PC-9 (cell line): ENCODE measurements at regions of chr9 and their contacts with region 1.

Region 1: DNA sequence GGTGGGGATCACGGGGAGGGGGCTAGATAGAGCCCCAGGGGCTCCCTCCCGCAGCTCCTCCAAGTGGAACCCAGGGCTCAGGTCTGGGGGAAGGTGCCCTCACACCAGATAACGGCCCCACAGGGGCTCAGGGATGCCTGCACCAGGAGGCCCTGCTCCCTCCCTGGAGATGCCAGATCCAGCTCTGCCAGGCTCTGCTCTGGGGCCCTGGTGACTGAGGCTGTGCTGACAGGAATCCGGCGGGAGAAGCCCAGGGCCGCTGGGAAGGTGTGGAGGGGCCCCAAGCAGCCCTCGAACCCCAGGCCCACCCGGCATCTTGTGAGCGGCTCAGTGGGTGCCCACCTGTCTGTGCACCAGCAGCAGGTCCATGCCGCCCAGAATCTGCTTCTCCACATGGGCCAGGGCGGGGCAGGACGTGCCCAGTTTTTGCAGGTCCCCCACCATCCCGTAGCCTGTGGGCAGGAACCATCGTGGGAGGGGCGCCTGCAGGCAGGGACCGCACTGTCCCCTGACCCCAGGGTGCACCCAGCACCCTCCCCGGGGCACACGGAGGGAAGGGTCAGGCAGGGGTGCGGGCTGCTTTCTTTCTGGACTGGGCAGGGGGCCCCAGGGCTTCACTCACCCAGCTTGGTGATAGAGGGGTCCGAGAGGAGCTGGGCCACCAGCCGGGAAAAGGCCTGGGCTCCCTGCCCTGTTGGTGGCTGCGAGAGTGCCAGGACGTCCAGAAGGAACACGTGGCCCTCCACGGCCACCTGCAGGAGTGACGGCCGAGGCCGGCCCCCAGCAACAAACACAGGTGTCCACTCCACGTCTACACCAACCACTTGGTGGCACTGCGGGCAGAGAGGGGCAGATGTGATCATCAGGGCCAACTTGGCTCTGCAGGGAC is 48.9 kb upstream of the NRARP start:
- DNase-seq: no peak
- H3K4me3 ChIP-seq: no peak overlapping the region
- H3K27ac ChIP-seq: no peak overlapping the region
- H3K4me1 ChIP-seq: no peaks in the 10 kb centered on the region
- H3K27me3 ChIP-seq: peaks cover 9% of the 10 kb centered on the region; the same call in 1 of the 2 replicates
- CTCF ChIP-seq: no peak; the same call in 1 of the 2 replicates

Region 2: DNA sequence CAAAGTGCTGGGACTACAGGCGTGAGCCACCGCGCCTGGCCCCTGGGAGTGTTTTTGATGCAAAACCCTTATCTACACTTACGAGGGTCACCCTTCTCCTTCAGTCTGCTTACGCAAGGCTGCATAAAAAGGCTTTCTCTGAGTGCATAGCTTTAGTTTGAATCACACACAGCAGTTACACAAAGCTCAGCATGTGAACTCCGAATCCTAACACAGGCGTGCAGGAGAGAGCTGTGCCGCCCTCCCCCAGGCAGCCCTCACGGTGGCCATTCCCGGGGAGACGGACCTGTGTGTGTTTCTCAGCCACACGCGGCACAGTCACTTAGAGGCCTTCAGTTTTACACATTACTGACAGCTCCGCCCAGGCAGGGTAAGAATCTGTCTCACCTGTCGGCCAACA is 45.3 kb after region 1 on chr9:
- CTCF ChIA-PET with region 1: no interaction called
- POLR2A ChIA-PET with region 1: interaction called, 30 read pairs
- intact Hi-C with region 1: no loop called
- DNase-seq: peak in 1 of 2 experiments; percentile 71
- H3K4me3 ChIP-seq: no peak overlapping the region
- H3K27ac ChIP-seq: no peak overlapping the region
- H3K4me1 ChIP-seq: peaks cover 9% of the 10 kb centered on the region
- H3K27me3 ChIP-seq: no peaks in the 10 kb centered on the region
- CTCF ChIP-seq: no peak